ENCODE measurements at regions of chr10 and their contacts with region 1.

Region 1: DNA sequence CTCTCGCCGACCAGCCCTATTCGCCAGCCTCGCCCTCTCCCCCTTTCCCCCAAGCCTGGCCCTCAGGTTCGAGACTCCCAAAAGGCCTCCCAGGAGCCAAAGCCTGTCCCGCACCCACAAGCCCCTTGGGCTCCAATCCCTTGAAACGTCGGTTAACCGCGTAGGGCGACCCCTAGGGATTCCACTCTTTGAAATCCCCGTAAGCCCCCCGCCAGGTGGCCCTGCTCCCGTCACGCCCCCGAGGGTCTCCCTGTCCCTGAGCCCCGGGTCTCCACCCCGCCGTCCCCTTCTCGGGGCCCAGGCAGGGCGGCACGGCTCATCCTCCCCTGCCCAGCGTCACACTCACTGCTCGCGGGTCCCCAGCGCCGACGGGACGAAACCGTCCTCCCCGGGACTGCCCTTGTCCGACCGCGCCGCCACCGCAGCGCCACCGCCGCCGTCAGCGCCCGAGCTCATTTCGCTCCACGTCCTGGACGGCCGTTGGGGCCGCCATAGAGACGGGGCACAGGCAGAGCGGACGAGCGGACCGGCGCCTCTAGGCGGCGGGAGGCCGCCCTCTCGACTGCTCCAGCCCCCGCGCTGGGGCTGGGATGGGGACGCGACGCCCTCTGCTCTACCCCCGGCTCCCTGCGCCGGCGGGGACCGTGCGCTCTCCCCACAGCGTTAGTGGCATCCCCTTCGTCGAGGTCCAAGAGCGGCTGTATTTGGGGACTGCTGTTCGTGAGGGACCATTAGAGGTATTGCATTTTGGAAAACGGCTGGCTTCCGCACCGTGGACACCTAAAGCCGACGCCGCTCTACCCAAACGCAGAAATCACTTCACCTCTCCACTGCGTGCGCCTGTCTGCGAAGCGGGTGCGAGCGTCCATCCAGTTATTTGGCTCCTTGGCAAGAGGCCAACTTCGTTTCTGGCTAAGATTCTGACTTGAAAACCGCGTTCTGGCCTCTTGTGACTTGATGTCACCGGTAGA is at the start of gene EEF1AKMT2:
- DNase-seq: peak; percentile 81 to 93 (median 88)
- ATAC-seq: peak; percentile 90 to 99 (median 98)
- H3K4me3 ChIP-seq: peak within 1 kb of the TSS; percentile 80 to 100 (median 98)
- H3K27ac ChIP-seq: peak within 1 kb of the TSS; percentile 56 to 96 (median 93)
- H3K4me1 ChIP-seq: peaks cover 0 to 18% (median 7%) of the 10 kb centered on the region in 12 donors
- H3K27me3 ChIP-seq: no peaks in the 10 kb centered on the region
- CTCF ChIP-seq: peak in 11 of 12 donors; percentile 13 to 66 (median 38)
- POLR2A ChIP-seq: peak in 1 of 2 donors; percentile 59
- total RNA-seq, gene EEF1AKMT2: 3.6 to 14.8 (median 11.6) TPM

Region 2: DNA sequence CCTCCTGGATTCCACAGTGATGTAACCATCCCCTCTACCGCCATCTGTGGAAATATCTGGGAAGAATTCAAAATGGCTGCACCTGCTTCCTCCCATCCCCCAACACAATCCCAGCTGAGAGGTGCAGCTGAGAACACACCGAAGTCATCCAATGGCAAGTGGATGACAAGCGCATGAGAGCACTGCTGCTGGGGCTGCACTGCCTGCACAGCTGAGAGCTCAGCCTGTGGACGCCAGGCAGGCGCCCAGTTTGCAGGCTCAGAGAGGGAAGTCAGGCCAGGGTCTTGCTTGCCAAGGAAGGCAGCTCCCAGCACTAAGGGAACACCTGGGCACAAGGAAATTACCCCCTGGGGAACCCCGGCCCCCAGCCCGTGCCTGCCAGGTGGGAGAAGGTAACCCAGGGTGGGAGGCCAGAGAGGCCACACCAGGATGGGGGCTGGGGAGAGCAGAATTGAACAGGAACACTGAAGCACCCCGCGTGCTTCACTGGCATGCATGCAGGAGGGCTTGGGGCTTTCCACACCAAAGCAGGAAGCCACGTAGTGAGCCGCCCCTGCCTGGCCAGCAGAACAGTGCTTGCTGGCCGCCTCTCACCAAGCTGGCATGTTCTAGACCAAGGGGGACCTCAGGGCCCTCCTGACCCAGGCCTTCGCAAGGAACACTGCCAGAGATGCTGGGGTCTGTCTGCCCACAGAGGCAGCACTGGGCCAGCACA is 93.7 kb before region 1 on chr10:
- intact Hi-C with region 1: no loop called
- DNase-seq: peak in 2 of 5 donors; percentile 22 to 64
- ATAC-seq: no peak
- H3K4me3 ChIP-seq: no peak overlapping the region
- H3K27ac ChIP-seq: peak overlapping the region in 9 of 12 donors; percentile 14 to 97 (median 89)
- H3K4me1 ChIP-seq: peaks cover 38 to 99% (median 81%) of the 10 kb centered on the region in 12 donors
- H3K27me3 ChIP-seq: no peaks in the 10 kb centered on the region
- CTCF ChIP-seq: no peak
- POLR2A ChIP-seq: no peak

Region 3: DNA sequence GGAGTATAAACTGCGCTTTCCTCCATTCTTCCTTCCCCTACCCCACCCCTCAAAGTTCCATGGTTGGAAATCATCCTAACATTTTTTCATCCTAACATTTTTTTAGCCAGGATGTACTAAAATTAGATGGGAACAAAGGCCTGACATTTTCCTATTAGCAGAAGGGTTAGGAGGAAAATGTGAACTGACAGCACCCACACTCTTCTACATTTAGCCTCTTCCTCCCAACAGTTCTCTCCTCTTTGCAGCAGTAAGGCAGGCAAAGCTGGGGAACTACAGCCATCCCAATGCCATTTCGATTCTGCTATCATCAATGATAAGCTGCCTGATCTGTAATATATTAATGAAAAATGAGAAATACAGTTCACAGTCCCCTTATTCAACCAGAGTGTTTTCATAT is 36.1 kb before region 1 on chr10:
- intact Hi-C with region 1: loop called in 1 of 10 experiments (anchors 5 kb)
- DNase-seq: no peak
- ATAC-seq: peak in 2 of 4 donors; percentile 49 to 50
- H3K4me3 ChIP-seq: no peak overlapping the region
- H3K27ac ChIP-seq: peak overlapping the region in 7 of 12 donors; percentile 2 to 71 (median 19)
- H3K4me1 ChIP-seq: peaks cover 0 to 36% (median 18%) of the 10 kb centered on the region in 12 donors
- H3K27me3 ChIP-seq: no peaks in the 10 kb centered on the region
- CTCF ChIP-seq: no peak
- POLR2A ChIP-seq: no peak

Measured in heart left ventricle (tissue), 16 donors.